ENCODE measurements at regions of chr6 and their contacts with region 1.

Region 1: DNA sequence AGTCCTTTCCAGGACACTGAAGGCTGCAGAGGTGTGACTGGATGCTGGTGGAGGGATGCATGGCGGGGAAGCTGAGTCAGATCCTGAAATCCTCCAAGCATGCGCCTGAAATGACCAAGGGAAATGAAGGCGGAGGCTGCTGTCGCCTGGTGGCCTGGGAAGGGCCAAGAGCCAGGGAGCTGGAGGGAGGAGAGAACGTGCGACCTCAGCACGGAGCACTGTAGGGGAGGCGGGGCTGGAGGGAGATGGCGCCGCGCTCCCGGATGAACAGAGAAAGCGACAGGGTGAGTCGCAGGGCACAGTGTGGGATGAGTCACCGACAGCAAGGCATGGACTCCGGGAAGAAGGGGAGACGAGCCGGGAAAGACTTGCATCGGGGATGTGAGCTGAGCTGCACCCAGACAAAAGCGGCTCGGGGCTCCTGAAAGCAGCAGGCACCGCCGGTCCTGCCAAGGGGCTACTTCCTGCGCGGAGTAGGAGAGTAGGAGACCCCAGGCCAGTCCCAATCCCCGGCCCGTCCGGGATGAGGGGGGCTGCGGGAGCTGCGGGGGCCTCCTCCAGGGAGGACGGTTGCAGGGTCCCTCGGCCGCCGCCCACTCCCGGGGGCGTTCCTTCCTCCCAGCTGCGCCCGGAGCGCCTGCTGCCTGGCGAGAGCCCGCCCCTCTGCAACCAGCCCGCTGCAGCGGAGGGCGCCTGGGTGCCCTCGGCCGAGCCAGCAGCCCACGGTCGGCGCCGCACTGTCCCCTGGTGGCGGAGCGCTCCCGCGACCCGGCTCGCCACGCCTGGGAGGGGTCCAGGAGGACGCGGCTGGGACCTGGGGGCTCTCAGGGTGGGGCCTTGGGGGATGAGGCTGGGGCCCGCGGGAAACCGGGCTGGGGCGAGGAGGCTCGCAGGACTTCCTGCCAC is 11.0 kb upstream of the NQO2 start:
- H3K4me3 Mint-ChIP-seq: peak overlapping the region; percentile 88
- H3K27ac Mint-ChIP-seq: peak overlapping the region; percentile 89
- H3K4me1 Mint-ChIP-seq: peaks cover 29% of the 10 kb centered on the region
- H3K27me3 Mint-ChIP-seq: no peaks in the 10 kb centered on the region

Region 2: GRCh38 chr6:2841264-2842138 is 147.2 kb before region 1 on chr6 and contains the start of gene SERPINB1:
- intact Hi-C with region 1: loop called (anchors 2 kb)
- H3K4me3 Mint-ChIP-seq: peak within 1 kb of the TSS; percentile 95
- H3K27ac Mint-ChIP-seq: peak within 1 kb of the TSS; percentile 94
- H3K4me1 Mint-ChIP-seq: peaks cover 74% of the 10 kb centered on the region
- H3K27me3 Mint-ChIP-seq: no peaks in the 10 kb centered on the region

Region 3: DNA sequence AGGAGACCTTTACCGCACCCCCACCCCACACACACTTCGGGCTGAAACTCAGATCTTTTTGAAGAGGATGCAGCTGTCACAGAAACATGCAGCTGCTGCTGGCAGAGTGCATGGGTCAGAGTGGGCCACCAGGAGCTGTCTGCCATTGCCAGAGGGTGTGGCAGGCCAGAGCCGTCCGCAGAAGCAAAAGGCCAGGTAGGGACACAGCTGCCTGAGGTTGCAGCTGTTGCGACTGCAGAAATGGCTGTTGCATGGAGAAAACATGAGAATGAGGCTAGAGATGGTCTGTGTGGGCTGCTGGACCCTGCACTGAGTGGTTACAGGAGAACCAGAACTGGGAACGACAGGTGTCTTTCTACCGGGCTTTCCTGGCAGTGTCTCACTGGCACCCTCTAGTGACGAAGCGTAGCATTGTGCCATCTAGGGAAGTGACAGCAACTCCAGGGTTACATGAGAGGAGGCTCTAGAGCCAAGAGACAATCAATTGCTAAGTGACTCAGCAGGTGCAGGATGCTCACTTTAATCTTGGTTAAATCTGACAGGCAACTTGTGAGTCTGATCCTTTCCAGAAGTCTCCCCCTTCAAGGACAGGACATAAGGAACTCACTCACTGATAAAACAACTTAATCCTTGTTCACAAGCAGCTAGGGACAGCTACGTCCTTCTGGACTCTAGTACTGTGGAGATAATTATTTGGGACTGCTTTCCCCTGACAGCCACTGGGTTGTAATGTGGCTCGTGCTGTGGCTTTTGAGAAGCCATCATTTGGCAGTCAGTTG is 56.5 kb before region 1 on chr6:
- intact Hi-C with region 1: loop called (anchors 1 kb)
- H3K4me3 Mint-ChIP-seq: peak overlapping the region; percentile 24
- H3K27ac Mint-ChIP-seq: no peak overlapping the region
- H3K4me1 Mint-ChIP-seq: peaks cover 9% of the 10 kb centered on the region
- H3K27me3 Mint-ChIP-seq: no peaks in the 10 kb centered on the region

Region 4: GRCh38 chr6:2952557-2953095 is 36.1 kb before region 1 on chr6:
- intact Hi-C with region 1: loop called (anchors 1 kb)
- H3K4me3 Mint-ChIP-seq: peak overlapping the region; percentile 14
- H3K27ac Mint-ChIP-seq: peak overlapping the region; percentile 94
- H3K4me1 Mint-ChIP-seq: peaks cover 27% of the 10 kb centered on the region
- H3K27me3 Mint-ChIP-seq: no peaks in the 10 kb centered on the region

Region 5: GRCh38 chr6:2971420-2972218 is 17.1 kb before region 1 on chr6 and contains the start of gene SERPINB6:
- intact Hi-C with region 1: loop called (anchors 1 kb)
- H3K4me3 Mint-ChIP-seq: peak within 1 kb of the TSS; percentile 91
- H3K27ac Mint-ChIP-seq: peak within 1 kb of the TSS; percentile 96
- H3K4me1 Mint-ChIP-seq: peaks cover 39% of the 10 kb centered on the region
- H3K27me3 Mint-ChIP-seq: no peaks in the 10 kb centered on the region

Region 6: GRCh38 chr6:3176562-3177355 is 188.1 kb after region 1 on chr6:
- intact Hi-C with region 1: no loop called
- H3K4me3 Mint-ChIP-seq: no peak overlapping the region
- H3K27ac Mint-ChIP-seq: no peak overlapping the region
- H3K4me1 Mint-ChIP-seq: peaks cover 6% of the 10 kb centered on the region
- H3K27me3 Mint-ChIP-seq: peaks cover 25% of the 10 kb centered on the region

Region 7: GRCh38 chr6:3258720-3259490 is 270.2 kb after region 1 on chr6 and contains the start of gene PSMG4:
- intact Hi-C with region 1: loop called (anchors 10 kb)
- H3K4me3 Mint-ChIP-seq: peak within 1 kb of the TSS; percentile 97
- H3K27ac Mint-ChIP-seq: peak within 1 kb of the TSS; percentile 83
- H3K4me1 Mint-ChIP-seq: peaks cover 38% of the 10 kb centered on the region
- H3K27me3 Mint-ChIP-seq: peaks cover 22% of the 10 kb centered on the region

Measured in dendritic cell treated with granulocyte-macrophage colony-stimulating factor and Interleukin-4, amounts not matched to agents 40 ng/mL and 50 ng/mL, for 4 days (primary cell).